A549 (cell line): ENCODE measurements at regions of chr13 and their contacts with region 1.

Region 1: GRCh38 chr13:94549232-94550061 is 46.5 kb downstream of the TGDS start:
- DNase-seq: peak; percentile 74 to 94
- ATAC-seq: peak; percentile 94
- H3K4me3 ChIP-seq: peak overlapping the region; percentile 58
- H3K27ac ChIP-seq: peak overlapping the region; percentile 88 to 93
- H3K4me1 ChIP-seq: peaks cover 16% of the 10 kb centered on the region; the same call in 1 of the 3 replicates
- CTCF ChIP-seq: no peak
- EP300 ChIP-seq: no peak
- POLR2A ChIP-seq: peak; percentile 71
- RAD21 ChIP-seq: no peak

Region 2: DNA sequence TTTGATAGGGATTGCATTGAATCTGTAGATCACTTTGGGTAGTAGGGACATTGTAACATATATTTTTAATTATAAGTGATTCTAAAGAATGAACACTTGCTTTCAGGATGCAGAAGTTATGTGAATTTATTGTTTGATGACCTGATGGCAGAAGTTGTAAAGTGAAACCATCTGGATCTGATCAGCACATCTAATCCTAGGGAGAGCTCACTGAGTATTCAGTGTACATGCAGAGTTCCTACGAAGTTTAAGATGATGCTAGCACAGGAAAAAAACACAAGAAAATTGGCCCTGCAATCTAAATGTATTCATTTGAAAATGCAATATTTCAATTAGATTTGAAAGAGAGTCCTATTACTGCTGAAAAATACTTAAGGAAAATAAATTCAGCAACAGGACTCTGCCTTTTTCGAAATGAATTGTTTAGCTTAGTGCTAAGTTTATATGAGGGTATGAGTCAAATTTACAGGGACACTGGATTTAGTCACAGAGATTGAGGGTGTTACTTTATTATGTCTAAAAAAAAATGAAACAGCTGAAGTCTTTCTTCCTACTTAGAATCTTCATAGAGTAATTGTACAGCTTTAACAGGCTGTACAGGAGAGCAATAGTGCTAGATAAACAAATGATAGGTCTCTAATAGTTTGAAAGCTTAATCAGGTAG is 455.7 kb before region 1 on chr13:
- CTCF ChIA-PET with region 1: no interaction called
- POLR2A ChIA-PET with region 1: no interaction called
- DNase-seq: no peak
- ATAC-seq: no peak
- H3K4me3 ChIP-seq: no peak overlapping the region
- H3K27ac ChIP-seq: no peak overlapping the region
- H3K4me1 ChIP-seq: no peaks in the 10 kb centered on the region
- CTCF ChIP-seq: no peak
- EP300 ChIP-seq: no peak
- POLR2A ChIP-seq: no peak
- RAD21 ChIP-seq: no peak

Region 3: DNA sequence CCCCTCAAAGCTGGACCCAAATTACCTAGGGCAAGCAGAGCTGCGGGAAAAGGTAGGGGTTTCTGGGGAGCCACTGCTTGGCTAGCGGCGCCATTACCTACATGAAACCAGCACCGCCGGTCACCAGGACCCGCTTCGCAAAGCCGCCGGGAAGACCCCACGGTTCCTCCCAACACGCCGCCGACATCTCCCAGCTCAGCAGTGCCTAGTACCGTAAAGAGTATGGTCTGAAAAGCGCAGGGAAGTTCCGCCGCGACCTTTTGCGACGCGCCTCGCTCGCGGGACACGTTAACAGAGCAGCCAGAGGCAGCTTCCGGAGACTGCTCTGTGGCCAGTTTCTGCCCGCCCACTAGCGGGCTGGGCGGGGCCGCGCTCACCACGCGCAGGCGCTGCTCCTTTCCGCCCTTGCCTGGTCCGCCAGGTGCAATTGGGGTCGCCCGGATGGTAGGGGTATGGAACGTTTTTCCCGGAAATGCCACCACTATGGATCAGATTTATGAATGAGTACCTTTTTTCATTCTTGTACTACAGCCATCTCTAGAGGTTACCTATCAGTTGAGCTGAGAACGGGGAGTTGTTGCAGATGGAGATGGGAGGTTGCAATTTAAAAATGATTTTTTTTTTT is 46.6 kb after region 1 on chr13 and contains the start of gene TGDS:
- CTCF ChIA-PET with region 1: no interaction called
- POLR2A ChIA-PET with region 1: interaction called, 30 read pairs
- DNase-seq: peak; percentile 73 to 92
- ATAC-seq: peak; percentile 99 to 100
- H3K4me3 ChIP-seq: peak within 1 kb of the TSS; percentile 87
- H3K27ac ChIP-seq: peak within 1 kb of the TSS; percentile 90 to 92
- H3K4me1 ChIP-seq: peaks cover 18% of the 10 kb centered on the region; the same call in 2 of the 3 replicates
- CTCF ChIP-seq: no peak
- EP300 ChIP-seq: no peak
- POLR2A ChIP-seq: peak; percentile 93
- RAD21 ChIP-seq: no peak
- polyA plus RNA-seq, gene TGDS: 19.0 and 24.3 TPM in 2 replicates

Region 4: GRCh38 chr13:94601446-94602431 is 52.3 kb after region 1 on chr13 and contains the start of gene GPR180:
- CTCF ChIA-PET with region 1: no interaction called
- POLR2A ChIA-PET with region 1: interaction called, 30 read pairs
- DNase-seq: peak; percentile 94 to 98
- ATAC-seq: peak; percentile 99 to 100
- H3K4me3 ChIP-seq: peak within 1 kb of the TSS; percentile 92
- H3K27ac ChIP-seq: peak within 1 kb of the TSS; percentile 98
- H3K4me1 ChIP-seq: peaks cover 10% of the 10 kb centered on the region; the same call in 1 of the 3 replicates
- CTCF ChIP-seq: no peak
- EP300 ChIP-seq: no peak
- POLR2A ChIP-seq: peak; percentile 61
- RAD21 ChIP-seq: no peak
- polyA plus RNA-seq, gene GPR180: 6.3 and 7.8 TPM in 2 replicates

Region 5: DNA sequence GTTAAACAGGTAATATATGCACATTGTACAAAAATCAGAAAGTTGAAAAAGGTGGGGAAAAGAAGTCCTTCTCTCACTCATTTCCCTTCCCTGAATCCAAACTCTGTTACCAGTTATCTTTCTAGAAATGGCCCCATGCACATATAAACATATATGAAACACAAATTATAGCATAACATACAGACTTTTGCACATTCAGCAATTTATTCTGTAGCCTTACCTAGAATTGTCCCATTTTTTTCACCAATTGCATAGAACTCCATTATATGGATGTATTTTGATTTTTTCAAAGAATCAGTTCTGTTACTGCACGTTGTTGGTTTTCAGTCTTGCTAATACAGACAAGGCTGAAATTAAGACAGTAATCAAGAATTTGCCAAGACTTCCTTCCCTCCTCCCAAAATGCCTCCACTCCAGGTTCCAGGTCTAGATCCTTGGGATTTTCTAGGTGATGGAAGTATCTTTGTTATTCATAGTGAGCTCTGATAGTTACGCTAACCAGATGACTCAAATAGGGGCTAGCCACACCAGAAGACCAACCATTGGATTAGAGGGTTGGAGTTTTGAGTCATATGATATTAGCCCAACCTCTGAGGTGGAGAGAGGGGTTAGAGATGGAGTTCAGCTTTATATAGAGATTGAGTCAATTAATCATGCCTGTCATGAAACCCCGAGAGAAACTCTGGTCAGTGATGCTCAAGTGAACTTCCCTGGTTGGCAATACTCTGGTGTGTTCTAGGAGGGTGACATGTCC is 83.0 kb after region 1 on chr13:
- CTCF ChIA-PET with region 1: no interaction called
- POLR2A ChIA-PET with region 1: no interaction called
- DNase-seq: no peak
- ATAC-seq: no peak
- H3K4me3 ChIP-seq: no peak overlapping the region
- H3K27ac ChIP-seq: no peak overlapping the region
- H3K4me1 ChIP-seq: no peaks in the 10 kb centered on the region
- CTCF ChIP-seq: no peak
- EP300 ChIP-seq: no peak
- POLR2A ChIP-seq: no peak
- RAD21 ChIP-seq: no peak

Region 6: GRCh38 chr13:94722609-94723345 is 173.3 kb after region 1 on chr13:
- CTCF ChIA-PET with region 1: no interaction called
- POLR2A ChIA-PET with region 1: no interaction called
- DNase-seq: no peak
- ATAC-seq: no peak
- H3K4me3 ChIP-seq: no peak overlapping the region
- H3K27ac ChIP-seq: no peak overlapping the region
- H3K4me1 ChIP-seq: no peaks in the 10 kb centered on the region
- CTCF ChIP-seq: no peak
- EP300 ChIP-seq: no peak
- POLR2A ChIP-seq: no peak
- RAD21 ChIP-seq: no peak